ENCODE measurements at regions of chr6 and their contacts with region 1.

Region 1: DNA sequence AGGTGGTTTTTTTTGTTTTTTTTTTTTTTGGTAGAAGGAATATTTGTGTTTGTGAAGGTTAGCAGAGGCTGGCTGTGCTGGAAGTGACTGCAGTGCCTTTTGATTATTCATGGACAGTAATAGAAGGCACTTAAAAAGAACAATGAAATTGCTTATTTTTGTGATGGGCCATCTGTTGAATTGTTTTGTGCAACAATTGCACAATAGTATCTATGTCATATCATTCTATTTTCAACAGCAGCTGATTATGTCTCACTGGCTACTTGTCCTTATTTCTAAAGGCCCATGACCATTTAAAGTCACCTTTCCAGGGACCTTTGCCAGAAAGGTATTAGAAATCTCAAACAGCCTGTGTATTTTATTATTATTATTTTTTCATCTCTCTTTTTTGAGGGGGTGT is 70.6 kb downstream of the AFG1L start:
- DNase-seq: no peak
- ATAC-seq: no peak
- H3K4me3 ChIP-seq: no peak overlapping the region
- H3K27ac ChIP-seq: no peak overlapping the region
- H3K4me1 ChIP-seq: no peaks in the 10 kb centered on the region
- H3K27me3 ChIP-seq: no peaks in the 10 kb centered on the region
- CTCF ChIP-seq: no peak

Region 2: DNA sequence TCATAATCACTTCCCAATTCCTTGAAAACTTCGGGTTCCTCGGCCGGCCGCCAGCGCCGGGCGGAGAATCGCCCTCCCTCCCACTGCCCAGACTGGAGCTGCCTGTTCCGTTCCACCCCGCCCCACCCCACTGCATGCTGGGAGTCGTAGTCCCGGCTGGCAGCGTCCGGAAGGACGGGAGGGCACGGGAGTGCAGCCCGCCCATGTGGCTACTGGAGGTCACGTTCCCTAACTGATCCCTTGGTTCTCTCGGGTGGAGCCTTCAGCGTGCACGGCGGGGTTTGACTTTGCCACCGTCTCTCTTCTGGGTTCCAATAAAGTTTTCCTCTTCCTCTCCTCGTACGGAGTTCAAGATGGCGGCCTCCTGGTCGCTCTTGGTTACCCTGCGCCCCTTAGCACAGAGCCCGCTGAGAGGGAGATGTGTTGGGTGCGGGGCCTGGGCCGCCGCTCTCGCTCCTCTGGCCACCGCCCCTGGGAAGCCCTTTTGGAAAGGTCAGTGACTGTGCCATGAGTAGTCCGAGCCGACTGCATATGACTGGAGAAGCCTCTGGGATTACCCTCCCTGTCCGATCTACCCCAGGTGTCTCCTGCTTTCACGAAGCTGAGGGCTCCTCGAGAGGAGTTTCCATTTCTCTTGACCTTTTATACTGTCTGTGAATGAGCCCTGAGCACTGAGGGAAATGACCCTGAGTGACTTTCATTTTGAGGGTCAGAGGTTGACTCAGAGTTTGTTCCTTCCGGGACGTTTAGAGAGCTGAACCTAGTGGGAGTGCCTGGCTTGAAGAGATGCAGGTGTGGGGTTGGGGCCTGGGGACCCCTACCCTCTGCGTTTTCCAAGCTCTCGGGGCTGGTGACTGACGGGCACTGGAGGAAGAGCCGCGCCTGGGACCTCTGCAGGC is 70.5 kb before region 1 on chr6 and contains the start of gene AFG1L:
- CTCF ChIA-PET with region 1: no interaction called
- POLR2A ChIA-PET with region 1: interaction called, 14 read pairs
- in situ Hi-C with region 1: no loop called
- intact Hi-C with region 1: no loop called
- DNase-seq: peak; percentile 86
- ATAC-seq: peak; percentile 99
- H3K4me3 ChIP-seq: peak within 1 kb of the TSS; percentile 65 to 94
- H3K27ac ChIP-seq: peak within 1 kb of the TSS; percentile 85
- H3K4me1 ChIP-seq: peaks cover 14% of the 10 kb centered on the region
- H3K27me3 ChIP-seq: no peaks in the 10 kb centered on the region
- CTCF ChIP-seq: no peak
- total RNA-seq, gene AFG1L: 12.4 TPM

Region 3: DNA sequence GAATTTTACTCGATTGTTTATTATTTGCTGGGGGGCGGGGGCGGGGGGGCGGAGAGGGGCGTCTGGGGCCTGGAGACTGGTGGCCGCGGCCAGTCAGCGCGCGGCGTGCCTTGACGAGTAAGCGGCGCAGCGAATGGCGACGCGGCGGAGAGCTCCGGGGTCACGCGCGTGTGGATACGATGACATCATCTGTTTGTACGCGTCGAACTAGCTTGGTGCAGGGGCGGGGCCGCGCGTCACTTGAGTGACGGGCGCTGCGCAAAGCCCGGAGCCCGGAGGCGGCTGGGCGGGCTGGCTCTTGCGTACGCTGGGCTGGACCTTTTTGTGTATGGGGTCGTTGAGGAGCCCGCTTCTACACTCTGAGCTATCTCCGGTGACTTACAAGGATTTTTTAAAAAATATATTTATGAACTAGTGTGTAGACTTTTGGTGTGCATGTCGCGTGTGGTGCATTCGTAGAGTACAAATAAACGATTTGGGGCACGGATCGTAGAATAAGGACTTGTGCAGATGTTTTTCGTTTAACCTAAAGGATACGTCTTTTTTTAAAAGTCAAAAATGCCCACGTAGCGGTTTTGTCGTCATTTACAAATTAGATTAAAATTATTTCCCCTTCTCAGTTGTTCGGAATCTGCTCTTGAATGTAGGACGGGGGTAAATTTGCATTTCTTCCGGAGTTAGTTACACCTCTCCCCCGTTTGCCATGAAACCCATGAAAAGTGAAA is 193.1 kb after region 1 on chr6:
- CTCF ChIA-PET with region 1: no interaction called
- POLR2A ChIA-PET with region 1: no interaction called
- in situ Hi-C with region 1: no loop called
- intact Hi-C with region 1: no loop called
- DNase-seq: peak; percentile 94
- ATAC-seq: peak; percentile 76
- H3K4me3 ChIP-seq: peak overlapping the region; percentile 96 to 98
- H3K27ac ChIP-seq: peak overlapping the region; percentile 82
- H3K4me1 ChIP-seq: peaks cover 13% of the 10 kb centered on the region
- H3K27me3 ChIP-seq: peaks cover 3% of the 10 kb centered on the region; the same call in 1 of the 2 replicates
- CTCF ChIP-seq: no peak